PC-9 (cell line): ENCODE measurements at regions of chr17 and their contacts with region 1.

Region 1: DNA sequence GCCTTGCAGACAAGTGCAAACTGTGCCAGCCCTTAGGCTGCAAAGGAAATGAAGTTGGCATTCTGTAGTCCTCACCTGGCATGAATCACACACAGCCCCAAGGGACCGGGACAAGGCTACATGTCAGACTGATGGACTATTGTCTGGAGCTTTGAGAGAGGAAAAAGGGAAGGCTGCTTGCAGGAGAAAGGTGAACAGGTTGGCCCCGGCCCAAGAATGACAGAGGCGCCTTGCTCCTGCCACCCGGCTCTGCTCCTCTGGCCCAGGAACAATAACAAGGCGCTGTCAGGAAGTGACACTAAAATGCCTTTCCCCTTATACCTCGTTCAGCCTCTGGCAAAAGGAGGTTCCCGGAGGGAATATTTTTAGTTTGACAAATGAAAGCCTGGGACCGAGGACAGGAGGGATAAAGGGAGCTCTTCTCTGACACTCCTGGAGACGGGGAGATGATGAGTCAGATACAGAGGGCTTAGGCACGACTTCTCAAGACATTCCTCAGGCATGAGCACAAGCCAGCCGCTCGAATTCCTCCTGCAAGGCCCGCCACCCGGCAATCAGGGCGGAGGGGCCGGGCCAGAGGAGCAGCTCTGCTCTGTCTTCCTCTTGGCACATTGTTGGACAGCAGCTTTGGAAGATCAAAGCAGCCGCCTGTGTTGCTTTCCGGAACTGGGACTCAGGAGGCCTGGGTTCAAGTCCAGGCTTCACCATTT is 105.8 kb downstream of the NOG start:
- DNase-seq: peak; percentile 94 to 100
- H3K4me3 ChIP-seq: peak overlapping the region; percentile 26; the same call in 1 of the 2 replicates
- H3K27ac ChIP-seq: peak overlapping the region; percentile 81
- H3K4me1 ChIP-seq: peaks cover 41% of the 10 kb centered on the region
- H3K27me3 ChIP-seq: no peaks in the 10 kb centered on the region
- CTCF ChIP-seq: no peak

Region 2: DNA sequence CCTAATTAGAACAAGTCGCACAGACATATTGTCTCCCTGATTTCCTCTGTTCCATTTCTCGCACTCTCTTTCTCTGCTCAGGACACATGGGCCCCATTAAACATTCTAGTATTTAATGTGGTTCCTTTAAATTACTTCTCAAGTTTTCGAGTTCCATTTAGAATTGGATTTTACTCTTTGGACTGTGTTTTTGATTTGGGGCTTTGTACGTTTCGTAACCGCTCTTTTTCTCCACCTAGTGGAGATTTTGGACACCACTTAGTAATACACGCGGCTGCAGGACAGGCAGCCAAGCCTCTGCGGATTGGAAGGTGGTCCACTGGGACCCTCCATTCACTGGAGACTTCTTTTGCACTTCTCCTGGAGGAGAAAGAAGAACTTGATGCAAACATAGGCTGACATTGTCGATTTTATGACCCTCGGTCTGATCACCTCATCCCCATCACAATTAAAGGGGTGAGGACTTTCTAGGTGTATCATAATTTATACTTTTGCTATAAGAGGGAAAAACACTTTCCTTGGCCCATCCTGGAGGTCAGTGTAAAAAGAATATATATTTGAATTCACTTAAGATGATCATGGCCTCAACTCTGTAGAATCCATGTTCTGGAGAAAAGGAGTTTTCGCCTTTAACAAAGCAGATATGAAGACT is 20.1 kb before region 1 on chr17:
- CTCF ChIA-PET with region 1: interaction called, 3 read pairs
- POLR2A ChIA-PET with region 1: interaction called, 5 read pairs
- intact Hi-C with region 1: loop called (anchors 2 kb)
- DNase-seq: no peak
- H3K4me3 ChIP-seq: peak overlapping the region; percentile 4; the same call in 1 of the 2 replicates
- H3K27ac ChIP-seq: peak overlapping the region; percentile 96
- H3K4me1 ChIP-seq: peaks cover 100% of the 10 kb centered on the region
- H3K27me3 ChIP-seq: no peaks in the 10 kb centered on the region
- CTCF ChIP-seq: peak; percentile 80

Region 3: GRCh38 chr17:57084802-57085447 is 385.6 kb after region 1 on chr17 and contains the start of gene AKAP1:
- CTCF ChIA-PET with region 1: no interaction called
- POLR2A ChIA-PET with region 1: no interaction called
- intact Hi-C with region 1: loop called (anchors 10 kb)
- DNase-seq: peak; percentile 86 to 97
- H3K4me3 ChIP-seq: peak within 1 kb of the TSS; percentile 91
- H3K27ac ChIP-seq: peak within 1 kb of the TSS; percentile 64
- H3K4me1 ChIP-seq: peaks cover 28% of the 10 kb centered on the region
- H3K27me3 ChIP-seq: no peaks in the 10 kb centered on the region
- CTCF ChIP-seq: peak; percentile 40; the same call in 1 of the 2 replicates
- total RNA-seq, gene AKAP1: 29.8 and 34.9 TPM in 2 replicates